ENCODE measurements at regions of chr10 and their contacts with region 1.

Region 1: GRCh38 chr10:70221030-70221429 is 12.2 kb downstream of the PPA1 start:
- DNase-seq: no peak
- H3K4me3 Mint-ChIP-seq: peak overlapping the region; percentile 53
- H3K27ac Mint-ChIP-seq: peak overlapping the region; percentile 73
- H3K4me1 Mint-ChIP-seq: peaks cover 37% of the 10 kb centered on the region
- H3K27me3 Mint-ChIP-seq: no peaks in the 10 kb centered on the region

Region 2: DNA sequence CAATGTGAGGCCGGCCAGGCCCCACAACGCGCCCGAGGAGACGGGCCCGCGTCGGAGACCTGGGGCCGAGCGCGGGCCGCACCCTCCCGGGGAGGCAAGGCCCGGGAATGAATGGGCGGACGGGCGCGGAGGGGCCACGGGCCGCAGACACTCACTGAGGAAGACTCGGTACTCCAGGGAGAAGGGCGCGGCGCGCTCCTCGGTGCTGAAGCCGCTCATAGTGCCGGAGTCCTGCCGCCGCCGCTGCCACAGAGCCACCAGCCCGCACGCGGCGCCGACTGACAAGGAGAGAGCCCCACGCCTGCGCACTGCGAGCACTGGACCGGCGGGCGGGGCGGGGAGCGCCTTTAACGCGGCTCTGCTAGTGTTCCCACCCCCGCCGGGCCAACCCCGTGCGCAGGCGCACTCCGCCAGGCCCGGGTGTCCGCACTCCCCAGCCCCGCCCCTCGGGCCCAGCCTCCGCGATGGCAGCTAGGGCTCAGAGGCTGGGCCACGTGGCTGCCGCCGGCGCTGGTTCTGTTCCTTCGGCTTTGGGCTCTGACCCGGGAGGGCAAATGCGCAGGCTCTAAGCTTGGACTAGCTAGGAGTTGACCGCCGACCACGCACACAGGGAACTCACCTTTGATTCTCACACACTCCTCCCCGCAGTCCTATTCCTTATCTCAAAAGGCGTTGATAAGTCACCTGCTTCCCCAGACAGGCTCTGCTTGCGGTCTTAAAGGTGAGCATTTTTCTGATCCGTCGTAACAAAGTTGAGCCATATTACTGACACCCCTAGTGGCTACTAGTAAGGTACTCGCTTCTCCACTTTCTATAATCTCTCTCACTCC is 12.3 kb after region 1 on chr10 and contains the start of gene PPA1:
- CTCF ChIA-PET with region 1: interaction called, 62 read pairs
- POLR2A ChIA-PET with region 1: interaction called, 49 read pairs
- DNase-seq: peak; percentile 99
- H3K4me3 Mint-ChIP-seq: peak within 1 kb of the TSS; percentile 80
- H3K27ac Mint-ChIP-seq: peak within 1 kb of the TSS; percentile 73
- H3K4me1 Mint-ChIP-seq: peaks cover 42% of the 10 kb centered on the region
- H3K27me3 Mint-ChIP-seq: no peaks in the 10 kb centered on the region
- total RNA-seq, gene PPA1: 155 to 158 TPM

Region 3: DNA sequence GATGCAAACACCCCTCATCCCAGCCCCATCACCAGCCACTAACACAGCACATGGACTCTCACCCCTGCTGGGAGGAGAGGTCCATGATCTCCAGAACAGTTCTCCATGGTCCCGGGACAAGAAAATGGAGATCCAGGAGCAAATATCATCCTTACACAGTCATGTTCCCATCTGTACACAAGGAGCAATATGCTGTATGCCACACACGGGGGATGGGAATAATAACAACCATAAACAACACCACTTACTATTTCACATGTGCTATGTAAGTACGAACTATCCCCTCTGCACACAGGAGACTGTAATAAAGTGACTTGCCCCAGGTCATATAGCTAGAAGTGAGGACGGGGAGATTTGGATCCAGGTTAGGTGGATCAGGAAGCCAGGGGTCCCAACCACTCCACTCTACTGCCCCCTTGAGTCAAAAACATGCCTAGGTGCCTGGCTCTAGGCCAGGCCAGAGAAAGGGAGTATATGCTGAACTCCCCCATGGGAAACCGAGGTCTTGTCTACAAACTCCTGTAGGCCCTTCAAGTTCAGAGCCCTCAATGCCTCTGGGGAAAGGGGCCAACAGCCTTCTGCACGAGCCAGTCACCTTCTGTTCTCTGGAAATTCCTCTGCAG is 127.3 kb after region 1 on chr10:
- CTCF ChIA-PET with region 1: interaction called, 15 read pairs
- POLR2A ChIA-PET with region 1: no interaction called
- DNase-seq: peak; percentile 30
- H3K4me3 Mint-ChIP-seq: no peak overlapping the region
- H3K27ac Mint-ChIP-seq: no peak overlapping the region
- H3K4me1 Mint-ChIP-seq: no peaks in the 10 kb centered on the region
- H3K27me3 Mint-ChIP-seq: no peaks in the 10 kb centered on the region

Region 4: DNA sequence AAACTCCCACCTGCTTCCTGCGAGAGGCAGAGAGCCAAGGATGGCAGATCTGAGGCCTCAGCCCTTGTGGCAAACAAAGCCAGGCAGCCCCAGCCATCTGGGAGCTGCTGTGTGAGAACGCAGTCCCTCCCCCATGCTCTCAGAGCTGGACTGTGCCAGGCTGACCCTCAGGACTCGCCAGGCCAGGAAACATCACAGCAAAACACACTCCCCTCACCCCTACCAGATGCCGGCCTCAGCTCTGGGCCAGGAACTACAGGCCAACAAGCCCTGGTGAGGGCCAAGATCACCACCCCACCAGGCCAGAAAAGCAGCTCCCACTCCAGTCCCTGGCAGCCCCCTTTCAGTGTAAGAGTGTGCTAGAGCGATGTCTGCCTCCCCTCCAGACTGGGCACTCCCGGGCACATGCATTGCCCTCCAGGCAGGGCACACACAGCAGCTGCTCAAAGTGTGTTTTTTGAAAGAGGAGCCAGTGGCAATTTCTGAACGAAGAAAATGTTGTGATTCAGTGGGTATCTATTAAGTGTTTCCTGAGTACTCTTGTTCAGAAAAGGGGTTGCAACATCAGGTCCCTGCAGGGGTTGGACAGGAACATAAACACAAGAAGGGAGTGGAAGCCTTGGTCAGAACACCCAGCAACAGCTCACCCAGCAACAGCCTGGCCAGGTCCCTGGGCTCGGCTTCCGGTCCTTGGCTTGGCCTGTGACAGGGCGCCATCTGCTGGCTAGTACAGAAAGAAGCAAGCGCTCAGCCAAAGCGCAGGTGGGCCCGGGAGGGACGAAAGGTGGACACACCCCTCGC is 143.1 kb after region 1 on chr10:
- CTCF ChIA-PET with region 1: interaction called, 313 read pairs
- POLR2A ChIA-PET with region 1: interaction called, 23 read pairs
- DNase-seq: peak; percentile 88
- H3K4me3 Mint-ChIP-seq: no peak overlapping the region
- H3K27ac Mint-ChIP-seq: no peak overlapping the region
- H3K4me1 Mint-ChIP-seq: peaks cover 11% of the 10 kb centered on the region
- H3K27me3 Mint-ChIP-seq: no peaks in the 10 kb centered on the region

Region 5: DNA sequence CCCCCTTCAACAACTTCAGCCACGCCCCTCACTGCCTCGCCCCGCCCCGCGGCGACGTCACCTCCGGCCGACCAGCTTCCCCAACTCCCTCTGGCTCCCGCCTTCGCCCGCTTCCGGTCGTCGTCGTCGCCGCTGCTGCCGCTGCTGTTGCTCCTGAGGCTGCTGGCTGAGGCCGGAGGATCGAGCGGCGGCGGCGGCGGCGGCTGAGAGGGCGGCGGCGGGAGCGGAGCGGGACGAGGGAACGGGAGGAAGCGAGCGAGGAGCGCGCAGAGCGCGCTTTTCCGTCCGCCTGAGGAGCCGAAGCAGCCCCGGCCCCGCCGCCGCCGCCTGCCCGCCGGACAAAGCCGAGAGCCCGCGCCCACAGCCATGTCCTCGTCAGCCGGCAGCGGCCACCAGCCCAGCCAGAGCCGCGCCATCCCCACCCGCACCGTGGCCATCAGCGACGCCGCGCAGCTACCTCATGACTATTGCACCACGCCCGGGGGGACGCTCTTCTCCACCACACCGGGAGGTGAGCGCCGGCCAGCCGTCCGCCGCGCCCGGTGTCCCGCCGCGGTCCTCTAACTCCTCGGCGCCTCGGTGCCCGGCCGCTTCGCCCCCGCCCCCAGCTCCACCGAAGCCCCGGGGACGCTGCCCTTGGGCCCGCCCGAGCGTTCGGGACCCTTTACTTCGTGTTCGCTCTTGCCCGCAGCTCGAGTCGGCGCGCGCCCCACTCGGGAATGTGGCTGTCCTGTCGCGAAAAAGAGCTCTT is 183.2 kb after region 1 on chr10 and contains the start of gene EIF4EBP2:
- CTCF ChIA-PET with region 1: interaction called, 21 read pairs
- POLR2A ChIA-PET with region 1: no interaction called
- DNase-seq: peak; percentile 99
- H3K4me3 Mint-ChIP-seq: peak within 1 kb of the TSS; percentile 99
- H3K27ac Mint-ChIP-seq: peak within 1 kb of the TSS; percentile 93
- H3K4me1 Mint-ChIP-seq: peaks cover 36% of the 10 kb centered on the region
- H3K27me3 Mint-ChIP-seq: no peaks in the 10 kb centered on the region
- total RNA-seq, gene EIF4EBP2: 52.6 to 53.8 TPM

Measured in activated CD4-positive, alpha-beta memory T cell treated with anti-CD3 and anti-CD28 coated beads, Interleukin-2, amount 10 ng/mL, durations not matched to agents 7 days and 5 days (primary cell).